Vagina (tissue), 2 donors: ENCODE measurements at regions of chr11 and their contacts with region 1.

Region 1: GRCh38 chr11:4863876-4864275 is 14.9 kb upstream of the OR51S1 start:
- DNase-seq: no peak
- H3K4me3 ChIP-seq: no peak overlapping the region
- H3K27ac ChIP-seq: no peak overlapping the region
- H3K4me1 ChIP-seq: no peaks in the 10 kb centered on the region
- H3K27me3 ChIP-seq: no peaks in the 10 kb centered on the region
- CTCF ChIP-seq: no peak
- POLR2A ChIP-seq: no peak

Region 2: GRCh38 chr11:3616721-3617351 is 1247.0 kb before region 1 on chr11:
- intact Hi-C with region 1: no loop called
- DNase-seq: no peak
- H3K4me3 ChIP-seq: no peak overlapping the region
- H3K27ac ChIP-seq: no peak overlapping the region
- H3K4me1 ChIP-seq: no peaks in the 10 kb centered on the region
- H3K27me3 ChIP-seq: no peaks in the 10 kb centered on the region
- CTCF ChIP-seq: no peak
- POLR2A ChIP-seq: no peak

Region 3: DNA sequence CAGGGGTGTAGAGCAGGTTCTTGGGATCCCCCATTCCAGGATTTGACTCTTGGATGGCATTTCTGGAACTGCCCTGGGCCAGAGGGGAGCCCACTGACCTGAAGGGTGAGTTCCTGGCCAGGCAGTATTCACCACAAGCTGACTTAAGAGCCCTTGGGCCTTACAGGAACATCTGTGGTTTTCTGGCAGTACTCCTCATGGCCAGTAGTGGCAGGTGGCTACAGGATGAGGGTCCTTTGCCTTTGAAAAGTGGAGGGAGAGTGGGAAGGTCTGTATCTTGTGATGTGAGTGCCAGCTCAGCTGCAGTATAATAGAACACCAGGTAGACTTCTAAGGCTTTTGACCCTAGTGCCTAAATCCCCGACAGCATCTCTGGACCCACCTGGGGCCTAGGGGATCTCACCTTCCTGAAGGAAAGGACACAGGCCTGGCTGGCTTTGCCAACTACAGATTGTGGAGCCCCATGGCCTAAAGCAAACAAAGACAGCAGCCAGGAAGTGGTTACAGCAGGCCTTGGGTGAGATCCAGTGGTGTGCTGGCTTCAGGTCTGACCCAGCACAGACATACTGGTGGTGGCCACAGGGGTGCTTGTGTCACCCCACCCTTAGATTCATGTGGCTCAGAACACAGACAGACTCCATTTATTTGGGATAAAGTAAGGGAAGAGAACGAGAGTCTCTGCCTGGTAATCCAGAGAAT is 23.9 kb before region 1 on chr11:
- intact Hi-C with region 1: loop called (anchors 1 kb)
- DNase-seq: no peak
- H3K4me3 ChIP-seq: no peak overlapping the region
- H3K27ac ChIP-seq: no peak overlapping the region
- H3K4me1 ChIP-seq: no peaks in the 10 kb centered on the region
- H3K27me3 ChIP-seq: no peaks in the 10 kb centered on the region
- CTCF ChIP-seq: no peak
- POLR2A ChIP-seq: no peak